ENCODE measurements at regions of chr13 and their contacts with region 1.

Region 1: GRCh38 chr13:113275387-113275786 is 21.7 kb upstream of the LAMP1 start:
- DNase-seq: peak in 7 of 9 experiments; percentile 7 to 61 (median 41)
- ATAC-seq: peak; percentile 57
- H3K4me3 ChIP-seq: no peak overlapping the region
- H3K4me3 Mint-ChIP-seq: no peak overlapping the region
- H3K27ac ChIP-seq: no peak overlapping the region
- H3K27ac Mint-ChIP-seq: no peak overlapping the region
- H3K4me1 ChIP-seq: peaks cover 8% of the 10 kb centered on the region
- H3K4me1 Mint-ChIP-seq: peaks cover 5% of the 10 kb centered on the region
- H3K27me3 ChIP-seq: no peaks in the 10 kb centered on the region
- H3K27me3 Mint-ChIP-seq: peaks cover 7% of the 10 kb centered on the region
- CTCF ChIP-seq: peak; percentile 34

Region 2: DNA sequence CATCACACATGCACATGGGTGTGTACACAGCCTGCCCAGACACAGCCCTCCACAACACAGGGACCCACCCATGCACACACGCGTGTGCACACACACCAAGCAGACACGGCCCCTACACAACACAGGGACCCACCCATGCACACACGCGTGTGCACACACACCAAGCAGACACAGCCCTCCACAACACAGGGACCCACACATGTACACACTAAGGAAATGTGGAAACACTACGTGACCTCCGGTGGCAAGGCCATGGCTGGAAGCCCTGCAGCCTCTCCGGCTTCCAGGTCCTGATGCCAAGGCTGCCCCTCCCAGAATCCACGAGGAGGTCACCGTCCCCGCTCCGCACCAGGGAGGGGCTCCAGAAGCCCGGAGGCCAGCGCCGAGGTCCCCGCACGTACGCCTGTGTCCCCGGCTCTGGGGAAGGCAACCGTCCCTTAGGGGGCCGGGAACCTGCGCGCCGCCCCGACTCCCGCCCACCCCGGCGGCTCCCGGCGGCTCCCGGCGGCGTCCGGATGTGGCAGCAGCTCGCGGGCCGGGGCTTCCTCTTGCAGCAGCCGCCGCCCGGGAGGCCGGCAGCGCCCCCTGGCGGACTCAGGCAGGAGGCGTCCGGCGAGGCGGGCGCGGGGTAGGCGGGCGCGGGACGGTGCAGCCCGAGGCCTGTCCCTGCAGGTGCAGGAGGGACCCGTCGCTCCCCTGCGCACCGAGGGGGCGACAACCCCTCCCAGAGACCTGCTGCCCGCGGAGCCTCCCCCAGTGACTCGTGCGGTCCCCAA is 118.4 kb after region 1 on chr13:
- CTCF ChIA-PET with region 1: interaction called, 4 read pairs
- POLR2A ChIA-PET with region 1: no interaction called
- intact Hi-C with region 1: loop called in 1 of 2 experiments (anchors 1 kb)
- DNase-seq: peak; percentile 66 to 88 (median 81)
- ATAC-seq: peak; percentile 96
- H3K4me3 ChIP-seq: peak overlapping the region; percentile 61 to 67
- H3K4me3 Mint-ChIP-seq: peak overlapping the region; percentile 87
- H3K27ac ChIP-seq: no peak overlapping the region
- H3K27ac Mint-ChIP-seq: peak overlapping the region; percentile 72
- H3K4me1 ChIP-seq: peaks cover 8% of the 10 kb centered on the region
- H3K4me1 Mint-ChIP-seq: peaks cover 3% of the 10 kb centered on the region
- H3K27me3 ChIP-seq: no peaks in the 10 kb centered on the region
- H3K27me3 Mint-ChIP-seq: no peaks in the 10 kb centered on the region
- CTCF ChIP-seq: peak; percentile 77

Region 3: DNA sequence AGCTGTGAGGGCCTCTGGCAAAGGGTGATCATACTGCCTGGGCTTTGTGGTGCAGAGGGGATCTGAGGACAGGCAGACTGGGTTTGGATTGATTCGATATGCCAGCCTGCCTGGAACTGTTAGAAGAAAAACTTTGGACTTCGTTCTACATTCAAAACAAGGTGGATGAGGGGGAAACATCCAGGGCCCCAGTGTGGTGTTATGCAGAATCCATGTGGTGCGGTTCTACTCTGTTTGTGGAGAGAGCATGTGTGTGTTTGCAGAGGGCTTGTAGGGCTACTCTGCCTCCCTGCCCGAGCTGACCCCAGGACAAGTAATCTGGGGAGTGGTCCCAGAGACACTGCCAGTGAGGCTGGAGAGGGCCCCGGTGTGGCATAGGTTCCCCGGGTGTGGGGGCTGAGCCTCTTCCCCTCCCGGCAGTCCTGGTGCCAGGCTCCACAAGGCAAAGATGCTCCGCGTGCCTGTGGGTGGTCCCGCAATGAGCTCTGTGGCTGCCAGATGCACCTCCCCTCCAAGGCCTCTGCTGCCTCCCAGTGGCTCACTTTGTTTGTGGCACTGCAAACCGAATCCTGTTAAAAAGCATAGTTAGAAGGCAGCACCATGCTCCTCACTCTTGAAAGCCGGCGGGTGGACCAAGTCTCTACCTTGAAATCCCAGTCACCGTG is 286.8 kb after region 1 on chr13:
- CTCF ChIA-PET with region 1: no interaction called
- POLR2A ChIA-PET with region 1: no interaction called
- intact Hi-C with region 1: loop called in 1 of 2 experiments (anchors 2 kb)
- DNase-seq: peak; percentile 17 to 63 (median 49)
- ATAC-seq: peak; percentile 72
- H3K4me3 ChIP-seq: no peak overlapping the region
- H3K4me3 Mint-ChIP-seq: no peak overlapping the region
- H3K27ac ChIP-seq: no peak overlapping the region
- H3K27ac Mint-ChIP-seq: no peak overlapping the region
- H3K4me1 ChIP-seq: no peaks in the 10 kb centered on the region
- H3K4me1 Mint-ChIP-seq: peaks cover 3% of the 10 kb centered on the region
- H3K27me3 ChIP-seq: no peaks in the 10 kb centered on the region
- H3K27me3 Mint-ChIP-seq: peaks cover 7% of the 10 kb centered on the region
- CTCF ChIP-seq: peak; percentile 56